Calu3 (cell line): ENCODE measurements at regions of chr17 and their contacts with region 1.

Region 1: GRCh38 chr17:41231731-41232130 is 518 bp upstream of the KRTAP9-3 start:
- DNase-seq: no peak
- H3K4me3 Mint-ChIP-seq: no peak overlapping the region
- H3K27ac Mint-ChIP-seq: no peak overlapping the region
- H3K4me1 Mint-ChIP-seq: no peaks in the 10 kb centered on the region
- H3K27me3 Mint-ChIP-seq: no peaks in the 10 kb centered on the region
- CTCF ChIP-seq: no peak

Region 2: DNA sequence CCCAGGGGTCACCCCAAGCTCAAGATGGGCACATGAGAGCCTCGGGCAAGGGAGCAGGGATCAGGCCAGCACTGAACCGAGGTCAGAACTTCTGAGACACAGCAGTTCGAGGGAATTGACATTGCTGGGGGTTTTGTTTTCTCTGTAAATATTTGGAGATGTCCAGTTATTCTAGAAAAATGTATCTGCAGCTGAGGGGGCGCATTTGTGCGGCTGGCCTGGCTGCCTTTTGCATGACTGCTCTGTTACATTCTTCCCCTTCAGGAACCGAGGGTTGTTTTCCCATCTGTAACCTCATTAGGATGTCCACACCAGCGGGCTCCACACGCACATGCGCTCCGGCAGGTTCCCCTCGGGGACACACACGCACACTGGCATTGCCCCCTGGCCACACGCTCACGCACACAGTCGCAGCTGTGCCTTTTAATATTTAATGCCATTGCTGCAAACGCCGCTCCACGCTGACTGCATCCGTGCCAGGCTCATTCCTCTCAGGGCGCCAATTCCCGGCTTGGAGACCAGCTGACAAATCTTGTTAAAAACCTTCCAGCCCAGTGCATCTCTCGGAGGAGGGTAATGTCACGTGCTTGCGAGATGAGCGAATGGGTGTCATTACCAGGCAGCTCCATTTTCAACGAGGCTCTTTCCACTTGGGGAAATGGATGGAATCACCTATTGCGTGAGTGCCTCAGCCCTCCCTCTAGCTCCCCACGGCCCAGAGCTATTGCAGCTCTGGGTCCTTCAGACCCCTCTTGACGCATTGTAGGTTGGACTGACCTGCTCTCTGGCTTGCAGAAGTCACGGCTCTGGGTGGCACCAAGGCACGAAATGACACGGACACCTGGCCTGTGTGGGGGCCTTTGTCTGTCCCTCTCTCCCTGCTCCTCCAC is 679.6 kb before region 1 on chr17:
- CTCF ChIA-PET with region 1: no interaction called
- intact Hi-C with region 1: no loop called
- DNase-seq: no peak
- H3K4me3 Mint-ChIP-seq: no peak overlapping the region
- H3K27ac Mint-ChIP-seq: no peak overlapping the region
- H3K4me1 Mint-ChIP-seq: peaks cover 20% of the 10 kb centered on the region
- H3K27me3 Mint-ChIP-seq: peaks cover 60% of the 10 kb centered on the region
- CTCF ChIP-seq: no peak

Region 3: DNA sequence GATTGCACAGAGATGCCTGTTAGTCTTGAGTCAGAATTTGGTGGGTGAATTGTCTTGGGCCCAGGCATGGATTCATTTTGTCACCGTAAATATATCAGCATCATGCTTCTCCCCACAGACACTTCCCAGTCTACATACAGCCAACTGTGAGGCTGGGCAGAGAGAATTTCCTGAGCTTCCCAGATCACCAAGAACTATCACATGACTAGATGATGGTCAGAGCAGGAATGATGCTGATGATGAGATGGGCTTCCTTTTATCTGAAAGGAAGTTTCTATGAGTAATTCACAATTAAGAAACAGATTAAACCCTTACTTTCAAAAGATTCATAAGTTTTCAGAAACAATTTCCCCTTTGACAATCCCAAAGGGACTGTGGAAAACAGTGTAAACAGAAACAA is 23.1 kb after region 1 on chr17:
- CTCF ChIA-PET with region 1: interaction called, 10 read pairs
- intact Hi-C with region 1: no loop called
- DNase-seq: no peak
- H3K4me3 Mint-ChIP-seq: no peak overlapping the region
- H3K27ac Mint-ChIP-seq: no peak overlapping the region
- H3K4me1 Mint-ChIP-seq: no peaks in the 10 kb centered on the region
- H3K27me3 Mint-ChIP-seq: peaks cover 22% of the 10 kb centered on the region
- CTCF ChIP-seq: no peak

Region 4: GRCh38 chr17:41308251-41308917 is 76.7 kb after region 1 on chr17:
- CTCF ChIA-PET with region 1: no interaction called
- intact Hi-C with region 1: no loop called
- DNase-seq: no peak
- H3K4me3 Mint-ChIP-seq: no peak overlapping the region
- H3K27ac Mint-ChIP-seq: no peak overlapping the region
- H3K4me1 Mint-ChIP-seq: peaks cover 8% of the 10 kb centered on the region
- H3K27me3 Mint-ChIP-seq: peaks cover 22% of the 10 kb centered on the region
- CTCF ChIP-seq: no peak